ENCODE measurements at regions of chr9 and their contacts with region 1.

Region 1: GRCh38 chr9:137034863-137035761 is 3.2 kb upstream of the FUT7 start:
- DNase-seq: peak; percentile 90
- ATAC-seq: peak; percentile 94
- H3K4me3 Mint-ChIP-seq: no peak overlapping the region
- H3K27ac Mint-ChIP-seq: no peak overlapping the region
- H3K4me1 Mint-ChIP-seq: no peaks in the 10 kb centered on the region
- H3K27me3 Mint-ChIP-seq: no peaks in the 10 kb centered on the region
- CTCF ChIP-seq: peak; percentile 83

Region 2: DNA sequence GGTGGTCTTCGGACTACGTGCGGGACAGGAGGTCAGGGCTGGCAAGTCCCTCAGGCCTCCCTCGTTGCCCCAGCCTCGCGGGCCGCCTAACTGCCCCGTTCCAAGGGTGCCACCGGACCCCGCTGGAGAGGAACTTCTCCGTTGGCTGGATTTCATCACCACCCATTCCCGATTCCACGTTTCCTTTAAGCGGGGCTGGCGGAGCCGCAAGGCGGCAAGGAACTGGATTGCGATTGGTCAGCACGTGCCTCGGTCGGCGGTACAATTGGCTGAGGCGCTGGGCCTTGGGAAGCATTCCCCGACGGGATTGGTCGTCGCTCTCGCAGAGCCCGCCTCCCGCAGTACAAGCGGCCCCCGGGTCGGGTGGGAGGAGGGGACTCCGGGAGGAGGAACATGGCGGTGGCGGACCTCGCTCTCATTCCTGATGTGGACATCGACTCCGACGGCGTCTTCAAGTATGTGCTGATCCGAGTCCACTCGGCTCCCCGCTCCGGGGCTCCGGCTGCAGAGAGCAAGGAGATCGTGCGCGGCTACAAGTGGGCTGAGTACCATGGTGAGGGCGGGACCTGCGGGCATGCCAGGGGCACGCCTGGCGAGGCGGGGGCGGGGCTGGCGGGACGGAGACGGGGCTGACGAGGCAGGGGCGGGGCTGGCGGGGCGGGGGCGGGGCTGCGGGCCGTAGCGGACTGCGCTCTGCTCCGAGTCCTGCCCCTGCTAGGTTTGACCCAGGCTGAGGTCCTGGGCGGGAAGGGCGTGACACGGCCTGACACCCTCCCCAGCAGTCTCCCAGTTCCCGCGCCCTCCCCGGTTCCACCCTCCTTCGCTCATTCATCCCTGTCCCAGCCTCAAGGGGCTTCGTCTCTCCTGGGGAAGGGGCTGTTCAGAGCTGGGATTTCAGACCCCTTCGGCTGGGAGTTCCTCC is 185.8 kb before region 1 on chr9 and contains the start of gene PHPT1:
- CTCF ChIA-PET with region 1: interaction called, 37 read pairs
- POLR2A ChIA-PET with region 1: interaction called, 4 read pairs
- DNase-seq: peak; percentile 99
- ATAC-seq: peak; percentile 75
- H3K4me3 Mint-ChIP-seq: peak within 1 kb of the TSS; percentile 94
- H3K27ac Mint-ChIP-seq: peak within 1 kb of the TSS; percentile 94
- H3K4me1 Mint-ChIP-seq: peaks cover 4% of the 10 kb centered on the region
- H3K27me3 Mint-ChIP-seq: peaks cover 3% of the 10 kb centered on the region
- CTCF ChIP-seq: no peak
- total RNA-seq, gene PHPT1: 138 to 176 TPM (median 173 TPM) in 3 replicates

Region 3: DNA sequence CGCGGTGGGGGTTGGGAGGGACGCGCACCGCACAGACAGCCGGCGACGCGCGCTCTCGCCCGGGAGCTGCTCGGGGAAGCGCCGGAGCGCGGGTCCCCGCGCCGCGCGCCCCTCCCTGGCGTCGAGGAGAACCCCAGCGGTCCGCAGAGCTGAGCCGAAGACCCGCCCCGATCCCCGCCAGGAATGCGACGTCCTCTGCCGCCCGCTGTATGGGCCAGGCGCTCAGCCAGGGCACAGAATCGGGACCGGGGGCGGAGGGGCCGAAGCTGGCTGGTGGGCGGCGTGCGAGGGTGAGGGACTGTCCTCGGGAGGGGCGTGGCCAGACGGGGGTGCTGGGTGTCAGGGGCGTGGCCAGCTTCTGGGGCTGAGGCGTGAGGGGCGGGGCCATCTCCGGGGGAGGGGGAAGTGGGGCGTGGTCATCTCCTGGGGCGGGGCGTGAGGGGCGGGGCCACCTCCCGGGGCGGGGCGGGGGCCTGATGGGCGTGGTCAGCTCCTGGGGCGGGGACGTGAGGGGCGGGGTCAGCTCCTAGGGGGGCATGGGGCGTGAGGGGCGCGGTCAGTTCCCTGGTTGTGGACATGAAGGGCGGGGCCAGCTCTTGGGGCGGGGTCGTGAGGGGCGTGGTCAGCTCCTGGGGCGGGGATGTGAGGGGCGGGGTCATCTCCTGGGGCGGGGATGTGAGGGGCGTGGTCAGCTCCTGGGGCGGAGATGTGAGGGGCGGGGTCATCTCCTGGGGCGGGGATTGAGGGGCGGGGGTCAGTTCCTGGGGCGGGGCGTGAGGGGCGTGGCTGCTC is 56.8 kb before region 1 on chr9:
- CTCF ChIA-PET with region 1: interaction called, 117 read pairs
- POLR2A ChIA-PET with region 1: no interaction called
- DNase-seq: peak; percentile 96
- ATAC-seq: peak; percentile 76
- H3K4me3 Mint-ChIP-seq: peak overlapping the region; percentile 66
- H3K27ac Mint-ChIP-seq: no peak overlapping the region
- H3K4me1 Mint-ChIP-seq: peaks cover 3% of the 10 kb centered on the region; the same call in 1 of the 2 replicates
- H3K27me3 Mint-ChIP-seq: peaks cover 3% of the 10 kb centered on the region; the same call in 1 of the 2 replicates
- CTCF ChIP-seq: no peak

Region 4: DNA sequence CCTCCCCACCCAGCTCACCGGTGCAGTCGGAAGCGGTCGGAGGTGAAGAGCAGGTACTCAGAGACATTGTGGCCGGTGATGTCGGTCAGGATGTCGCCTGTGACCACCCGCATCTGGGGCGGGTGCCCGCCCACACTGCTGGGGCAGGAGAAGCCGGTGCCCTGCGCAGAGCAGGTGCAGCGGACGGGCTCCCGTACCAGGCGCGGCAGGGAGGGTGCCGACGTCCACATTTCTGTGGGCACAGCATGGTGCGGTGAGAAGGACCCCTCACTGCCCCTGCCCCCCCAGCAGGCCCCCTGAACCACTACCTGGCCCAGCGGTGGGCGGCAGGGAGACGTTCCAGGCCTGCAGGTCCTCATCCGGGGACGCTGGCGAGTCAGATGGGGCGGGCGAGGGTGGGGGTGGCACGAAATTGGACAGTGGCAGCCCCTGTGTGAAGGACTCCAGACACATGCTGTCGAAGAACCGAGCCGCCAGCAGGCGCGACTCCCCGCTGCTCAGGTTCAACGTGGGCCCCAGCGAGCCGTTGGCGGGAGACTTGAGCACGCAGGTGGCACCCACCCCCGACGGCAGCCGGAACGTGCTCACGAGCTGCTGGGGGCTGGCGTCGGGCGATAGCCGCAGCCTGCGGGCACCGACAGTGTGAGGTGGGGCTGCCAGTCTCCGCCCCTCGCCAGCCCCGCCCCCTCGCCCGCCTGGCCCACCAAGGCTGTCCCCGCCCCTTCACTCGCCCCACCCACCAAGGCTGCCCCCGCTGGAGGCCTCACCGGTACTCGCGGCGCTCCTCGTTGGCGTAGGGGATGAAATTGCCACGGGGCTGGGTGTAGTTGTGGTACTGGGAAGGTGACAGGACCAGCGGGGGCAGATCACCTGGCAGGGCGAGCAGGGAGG is 22.2 kb before region 1 on chr9:
- CTCF ChIA-PET with region 1: interaction called, 14 read pairs
- POLR2A ChIA-PET with region 1: no interaction called
- DNase-seq: peak; percentile 70
- ATAC-seq: peak; percentile 65
- H3K4me3 Mint-ChIP-seq: no peak overlapping the region
- H3K27ac Mint-ChIP-seq: no peak overlapping the region
- H3K4me1 Mint-ChIP-seq: no peaks in the 10 kb centered on the region
- H3K27me3 Mint-ChIP-seq: no peaks in the 10 kb centered on the region
- CTCF ChIP-seq: no peak

Region 5: GRCh38 chr9:137064027-137064879 is 29.1 kb after region 1 on chr9:
- CTCF ChIA-PET with region 1: interaction called, 91 read pairs
- POLR2A ChIA-PET with region 1: no interaction called
- DNase-seq: peak; percentile 84
- ATAC-seq: peak; percentile 51
- H3K4me3 Mint-ChIP-seq: no peak overlapping the region
- H3K27ac Mint-ChIP-seq: no peak overlapping the region
- H3K4me1 Mint-ChIP-seq: peaks cover 12% of the 10 kb centered on the region
- H3K27me3 Mint-ChIP-seq: peaks cover 6% of the 10 kb centered on the region
- CTCF ChIP-seq: peak; percentile 99

Region 6: DNA sequence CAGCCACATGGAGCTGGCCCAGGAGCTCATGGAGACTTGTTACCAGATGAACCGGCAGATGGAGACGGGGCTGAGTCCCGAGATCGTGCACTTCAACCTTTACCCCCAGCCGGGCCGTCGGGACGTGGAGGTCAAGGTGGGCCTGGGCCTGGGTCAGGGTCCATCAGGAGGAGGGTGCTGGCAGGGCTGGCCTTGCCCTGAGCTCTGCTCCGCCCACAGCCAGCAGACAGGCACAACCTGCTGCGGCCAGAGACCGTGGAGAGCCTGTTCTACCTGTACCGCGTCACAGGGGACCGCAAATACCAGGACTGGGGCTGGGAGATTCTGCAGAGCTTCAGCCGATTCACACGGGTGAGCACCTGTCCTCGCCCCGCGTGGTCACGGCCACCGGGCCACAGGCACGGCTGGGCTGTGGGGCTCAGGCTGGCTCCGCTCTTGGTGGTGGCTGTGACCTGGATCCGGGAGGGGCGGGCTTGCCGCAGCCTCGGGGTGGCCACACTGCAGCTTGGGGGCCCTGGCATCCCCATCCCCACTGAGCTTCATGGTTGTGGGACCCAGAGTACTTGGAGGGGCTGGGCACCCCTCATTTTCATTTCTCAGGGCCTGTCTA is 72.3 kb after region 1 on chr9:
- CTCF ChIA-PET with region 1: no interaction called
- POLR2A ChIA-PET with region 1: no interaction called
- DNase-seq: no peak
- ATAC-seq: no peak
- H3K4me3 Mint-ChIP-seq: no peak overlapping the region
- H3K27ac Mint-ChIP-seq: no peak overlapping the region
- H3K4me1 Mint-ChIP-seq: no peaks in the 10 kb centered on the region
- H3K27me3 Mint-ChIP-seq: no peaks in the 10 kb centered on the region
- CTCF ChIP-seq: no peak

Region 7: GRCh38 chr9:137138722-137139467 is 103.8 kb after region 1 on chr9 and contains the start of gene GRIN1:
- CTCF ChIA-PET with region 1: interaction called, 11 read pairs
- POLR2A ChIA-PET with region 1: no interaction called
- DNase-seq: peak; percentile 55
- ATAC-seq: peak; percentile 25
- H3K4me3 Mint-ChIP-seq: peak within 1 kb of the TSS; percentile 55
- H3K27ac Mint-ChIP-seq: no peak within 1 kb of the TSS
- H3K4me1 Mint-ChIP-seq: peaks cover 6% of the 10 kb centered on the region; the same call in 1 of the 2 replicates
- H3K27me3 Mint-ChIP-seq: peaks cover 75% of the 10 kb centered on the region
- CTCF ChIP-seq: no peak
- total RNA-seq, gene GRIN1: 4.0 to 6.6 TPM (median 4.1 TPM) in 3 replicates

Measured in WTC11 (cell line).